Aorta (tissue), 5 donors: ENCODE measurements at regions of chr7 and their contacts with region 1.

Region 1: GRCh38 chr7:28685644-28686417 is 272.3 kb downstream of the TRIL start:
- DNase-seq: peak; percentile 94 to 96
- ATAC-seq: peak; percentile 96
- H3K4me3 ChIP-seq: peak overlapping the region; percentile 85 to 88
- H3K27ac ChIP-seq: peak overlapping the region; percentile 83 to 85
- H3K4me1 ChIP-seq: no peaks in the 10 kb centered on the region
- H3K27me3 ChIP-seq: no peaks in the 10 kb centered on the region

Region 2: GRCh38 chr7:28539289-28539981 is 146.4 kb before region 1 on chr7:
- intact Hi-C with region 1: no loop called
- DNase-seq: no peak
- ATAC-seq: no peak
- H3K4me3 ChIP-seq: no peak overlapping the region
- H3K27ac ChIP-seq: no peak overlapping the region
- H3K4me1 ChIP-seq: peaks cover 0 to under 1% of the 10 kb centered on the region in 2 donors
- H3K27me3 ChIP-seq: no peaks in the 10 kb centered on the region

Region 3: GRCh38 chr7:28626624-28627262 is 59.1 kb before region 1 on chr7:
- intact Hi-C with region 1: loop called (anchors 2 to 5 kb)
- DNase-seq: no peak
- ATAC-seq: peak; percentile 70
- H3K4me3 ChIP-seq: no peak overlapping the region
- H3K27ac ChIP-seq: no peak overlapping the region
- H3K4me1 ChIP-seq: peaks cover 0 to 27% of the 10 kb centered on the region in 2 donors
- H3K27me3 ChIP-seq: no peaks in the 10 kb centered on the region